ENCODE measurements at regions of chr20 and their contacts with region 1.

Region 1: GRCh38 chr20:561437-562231 is 18.0 kb upstream of the CSNK2A1 start:
- DNase-seq: peak; percentile 62 to 91 (median 75)
- H3K4me3 ChIP-seq: no peak overlapping the region
- H3K27ac ChIP-seq: no peak overlapping the region
- H3K4me1 ChIP-seq: no peaks in the 10 kb centered on the region
- H3K27me3 ChIP-seq: no peaks in the 10 kb centered on the region
- CTCF ChIP-seq: peak; percentile 97 to 99 (median 99)
- POLR2A ChIP-seq: no peak

Region 2: DNA sequence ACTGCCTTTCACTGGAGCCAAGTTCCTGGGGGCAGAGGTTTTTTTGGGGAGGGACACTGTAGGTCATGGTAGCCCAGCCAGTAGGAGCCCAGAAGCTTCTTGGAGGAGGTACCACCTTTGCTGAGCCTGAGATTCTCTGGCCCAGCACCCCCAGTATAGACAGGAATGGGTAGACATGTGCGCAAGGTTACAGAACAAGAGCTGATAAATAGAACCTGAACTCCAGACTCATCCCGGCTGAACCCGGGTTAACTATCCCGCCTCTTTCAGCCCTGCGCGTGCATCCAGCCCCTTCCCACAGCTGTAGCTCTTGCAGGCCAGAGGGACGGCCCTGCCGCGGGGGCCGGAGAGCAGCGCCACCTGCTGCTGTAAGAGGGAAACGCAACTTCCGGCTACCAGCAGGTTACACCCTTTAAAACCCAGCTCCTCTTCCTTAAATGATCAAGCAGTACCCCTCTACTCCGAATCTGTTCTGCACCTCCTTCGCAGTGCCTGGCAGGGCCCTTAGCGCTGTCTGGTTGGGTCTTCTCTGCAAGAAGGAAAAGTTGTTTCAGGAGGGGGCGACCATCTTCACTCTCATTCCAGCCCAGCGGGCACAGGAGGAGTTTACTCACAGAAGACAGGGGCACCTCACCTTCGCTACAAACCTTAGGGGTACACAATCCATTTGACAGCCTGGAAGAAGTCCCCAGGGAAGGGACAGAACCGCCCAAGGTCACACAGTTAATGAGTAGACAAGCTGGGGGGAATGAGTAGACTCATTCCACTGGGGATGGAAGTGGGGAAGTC is 83.9 kb after region 1 on chr20:
- intact Hi-C with region 1: loop called (anchors 5 kb)
- DNase-seq: peak; percentile 49 to 83 (median 67)
- H3K4me3 ChIP-seq: no peak overlapping the region
- H3K27ac ChIP-seq: peak overlapping the region in 3 of 5 donors; percentile 40 to 78 (median 52)
- H3K4me1 ChIP-seq: peaks cover 22 to 25% of the 10 kb centered on the region in 2 donors
- H3K27me3 ChIP-seq: no peaks in the 10 kb centered on the region
- CTCF ChIP-seq: peak; percentile 77 to 92 (median 86)
- POLR2A ChIP-seq: no peak

Region 3: DNA sequence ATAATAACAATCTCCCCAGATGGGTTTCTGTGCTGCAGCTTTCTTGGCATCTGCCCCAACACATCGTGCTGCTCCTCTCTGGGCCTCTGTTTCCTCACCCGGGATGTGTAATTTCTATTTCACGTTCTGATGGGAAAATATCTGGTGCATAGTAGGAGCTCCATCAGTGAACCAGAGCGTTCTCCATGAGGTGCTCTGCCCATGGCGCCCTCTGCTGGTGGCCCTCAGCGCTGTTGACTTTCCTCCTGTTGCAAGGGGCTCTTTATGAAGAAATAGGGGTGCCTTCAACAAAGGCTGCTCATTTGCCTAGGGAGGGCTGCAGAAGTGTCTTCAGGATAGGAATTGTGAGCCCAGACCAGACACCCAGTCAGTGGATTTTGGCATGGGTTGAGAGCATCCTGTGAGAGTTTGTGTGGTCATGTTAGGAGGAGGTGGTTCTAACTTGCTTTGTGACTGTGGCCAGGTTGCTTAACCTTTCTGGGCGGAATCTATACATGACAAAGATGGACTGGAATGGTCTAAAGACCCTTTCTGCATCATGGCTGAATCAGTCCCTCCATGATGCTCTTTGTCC is 105.8 kb after region 1 on chr20:
- intact Hi-C with region 1: loop called in 1 of 2 experiments (anchors 2 kb)
- DNase-seq: peak in 5 of 7 donors; percentile 44 to 78 (median 69)
- H3K4me3 ChIP-seq: no peak overlapping the region
- H3K27ac ChIP-seq: no peak overlapping the region
- H3K4me1 ChIP-seq: no peaks in the 10 kb centered on the region
- H3K27me3 ChIP-seq: peaks cover 43% of the 10 kb centered on the region
- CTCF ChIP-seq: peak; percentile 32 to 76 (median 72)
- POLR2A ChIP-seq: no peak

Region 4: DNA sequence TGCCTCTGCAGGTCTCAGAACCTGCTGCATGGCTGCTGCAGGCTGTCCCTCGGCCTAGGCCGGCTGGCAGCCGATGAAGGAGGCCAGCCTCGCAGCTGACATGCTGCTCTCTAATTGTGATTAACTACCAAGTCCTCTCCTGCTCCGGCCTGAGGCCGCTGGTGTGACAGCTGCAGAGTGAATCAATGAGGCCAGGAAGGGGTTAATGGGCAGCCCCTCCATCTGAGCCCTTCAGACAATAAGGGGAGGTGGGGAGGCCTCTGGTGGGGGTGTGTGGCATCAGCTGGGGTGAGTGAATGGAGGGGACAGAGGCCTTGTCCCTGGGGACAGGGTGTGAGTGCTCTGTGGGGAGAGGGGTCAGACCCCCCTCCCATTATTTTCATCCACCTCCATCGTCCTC is 172.2 kb after region 1 on chr20:
- intact Hi-C with region 1: loop called (anchors 5 kb)
- DNase-seq: no peak
- H3K4me3 ChIP-seq: no peak overlapping the region
- H3K27ac ChIP-seq: no peak overlapping the region
- H3K4me1 ChIP-seq: no peaks in the 10 kb centered on the region
- H3K27me3 ChIP-seq: peaks cover 4% of the 10 kb centered on the region
- CTCF ChIP-seq: no peak
- POLR2A ChIP-seq: no peak

Measured in adrenal gland (tissue), 19 donors.